ENCODE measurements at regions of chr11 and their contacts with region 1.

Region 1: GRCh38 chr11:9613118-9613829 is 39.8 kb downstream of the WEE1 start:
- DNase-seq: peak; percentile 87
- H3K4me3 Mint-ChIP-seq: peak overlapping the region; percentile 81
- H3K27ac Mint-ChIP-seq: peak overlapping the region; percentile 97
- H3K4me1 Mint-ChIP-seq: peaks cover 31% of the 10 kb centered on the region
- H3K27me3 Mint-ChIP-seq: no peaks in the 10 kb centered on the region

Region 2: GRCh38 chr11:9534791-9535781 is 78.2 kb before region 1 on chr11:
- CTCF ChIA-PET with region 1: interaction called, 17 read pairs
- POLR2A ChIA-PET with region 1: no interaction called
- DNase-seq: peak; percentile 76
- H3K4me3 Mint-ChIP-seq: no peak overlapping the region
- H3K27ac Mint-ChIP-seq: no peak overlapping the region
- H3K4me1 Mint-ChIP-seq: peaks cover 1% of the 10 kb centered on the region
- H3K27me3 Mint-ChIP-seq: no peaks in the 10 kb centered on the region

Region 3: GRCh38 chr11:9573052-9573774 is 40.1 kb before region 1 on chr11 and contains the start of gene WEE1:
- CTCF ChIA-PET with region 1: interaction called, 10 read pairs
- POLR2A ChIA-PET with region 1: no interaction called
- DNase-seq: peak; percentile 98
- H3K4me3 Mint-ChIP-seq: peak within 1 kb of the TSS; percentile 92
- H3K27ac Mint-ChIP-seq: peak within 1 kb of the TSS; percentile 83
- H3K4me1 Mint-ChIP-seq: peaks cover 52% of the 10 kb centered on the region
- H3K27me3 Mint-ChIP-seq: peaks cover 3% of the 10 kb centered on the region
- total RNA-seq, gene WEE1: 60.5 to 64.2 TPM

Region 4: GRCh38 chr11:9590717-9591116 is 22.6 kb before region 1 on chr11:
- CTCF ChIA-PET with region 1: interaction called, 23 read pairs
- POLR2A ChIA-PET with region 1: no interaction called
- DNase-seq: no peak
- H3K4me3 Mint-ChIP-seq: no peak overlapping the region
- H3K27ac Mint-ChIP-seq: no peak overlapping the region
- H3K4me1 Mint-ChIP-seq: peaks cover 7% of the 10 kb centered on the region
- H3K27me3 Mint-ChIP-seq: no peaks in the 10 kb centered on the region

Region 5: DNA sequence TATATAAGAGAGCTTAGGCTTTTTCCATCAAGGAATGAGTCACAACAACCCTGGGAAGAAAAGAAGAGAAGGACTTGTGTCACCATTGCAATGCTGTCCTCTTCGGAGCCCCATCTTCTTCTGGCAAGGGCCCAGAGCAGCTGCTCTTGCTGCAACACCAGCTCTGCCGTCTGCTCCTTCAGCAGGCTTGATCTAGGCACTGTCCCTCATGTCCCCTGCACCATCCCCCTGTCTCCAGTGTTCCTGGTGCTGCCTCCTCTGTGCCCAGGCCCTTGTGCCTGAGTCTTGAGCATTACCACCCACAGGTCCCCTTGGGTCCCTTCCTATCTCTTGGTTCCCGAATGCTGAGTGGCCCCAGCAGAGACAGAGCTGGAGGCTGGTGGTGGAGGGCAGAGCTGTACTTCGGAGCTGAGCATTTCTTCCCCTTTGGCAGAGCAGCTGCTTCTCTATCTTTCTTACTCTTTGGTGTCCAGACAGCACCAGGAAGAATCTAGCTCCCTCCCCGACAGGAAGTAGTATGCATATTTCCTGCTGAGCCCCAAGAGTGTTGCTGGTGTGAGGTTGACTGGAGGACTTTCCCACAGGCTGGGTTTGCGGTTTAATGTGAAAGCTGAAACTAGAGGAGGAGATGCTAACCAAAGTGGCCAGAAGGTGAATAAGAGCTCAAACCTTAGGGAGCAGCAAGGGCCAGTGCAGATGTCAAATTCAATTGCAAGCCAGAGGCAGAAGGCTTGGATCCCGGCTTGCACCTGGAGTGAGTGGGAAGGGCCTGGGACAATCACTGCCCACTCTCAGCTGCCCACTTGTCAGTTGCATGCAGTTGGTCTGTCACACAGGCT is 12.0 kb before region 1 on chr11:
- CTCF ChIA-PET with region 1: interaction called, 23 read pairs
- POLR2A ChIA-PET with region 1: no interaction called
- DNase-seq: peak; percentile 82
- H3K4me3 Mint-ChIP-seq: peak overlapping the region; percentile 72
- H3K27ac Mint-ChIP-seq: peak overlapping the region; percentile 91
- H3K4me1 Mint-ChIP-seq: peaks cover 33% of the 10 kb centered on the region
- H3K27me3 Mint-ChIP-seq: peaks cover 4% of the 10 kb centered on the region

Region 6: GRCh38 chr11:9748361-9748970 is 135.2 kb after region 1 on chr11:
- CTCF ChIA-PET with region 1: interaction called, 15 read pairs
- POLR2A ChIA-PET with region 1: interaction called, 3 read pairs
- DNase-seq: peak; percentile 85
- H3K4me3 Mint-ChIP-seq: no peak overlapping the region
- H3K27ac Mint-ChIP-seq: peak overlapping the region; percentile 3
- H3K4me1 Mint-ChIP-seq: peaks cover 19% of the 10 kb centered on the region
- H3K27me3 Mint-ChIP-seq: no peaks in the 10 kb centered on the region

Region 7: DNA sequence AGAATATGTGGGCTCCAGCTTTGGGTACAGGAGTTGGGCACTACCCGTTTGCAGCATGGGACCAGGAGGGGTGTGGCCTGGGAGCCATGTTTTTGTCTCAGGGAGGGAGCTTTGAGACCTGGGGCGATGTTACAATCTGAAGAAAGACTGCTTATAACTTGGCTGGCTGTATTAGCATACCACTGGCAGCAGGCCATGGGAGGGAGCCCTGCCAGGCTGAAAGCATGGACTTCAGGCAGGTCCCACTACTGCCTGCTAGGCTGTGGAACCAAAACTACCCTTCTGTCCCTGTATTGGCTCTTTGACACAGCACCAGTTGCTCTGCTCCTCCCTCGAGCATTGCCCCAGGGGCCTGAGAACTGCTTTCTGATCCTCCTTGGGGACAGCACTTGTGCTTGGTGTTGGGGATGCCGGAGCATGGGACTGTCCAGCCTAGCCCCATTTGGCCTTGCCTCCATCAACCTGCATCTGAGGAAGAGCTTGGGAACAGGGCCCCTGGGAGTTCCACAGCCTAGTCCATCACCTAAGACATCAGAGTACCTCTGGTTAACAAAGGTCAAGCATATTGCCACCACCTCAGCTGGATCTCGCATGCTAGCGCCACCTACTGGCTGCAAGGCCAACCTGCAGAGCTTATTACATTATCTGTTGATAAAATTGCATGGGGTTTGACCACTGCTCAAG is 463.3 kb after region 1 on chr11:
- CTCF ChIA-PET with region 1: no interaction called
- POLR2A ChIA-PET with region 1: no interaction called
- DNase-seq: peak; percentile 37
- H3K4me3 Mint-ChIP-seq: no peak overlapping the region
- H3K27ac Mint-ChIP-seq: no peak overlapping the region
- H3K4me1 Mint-ChIP-seq: no peaks in the 10 kb centered on the region
- H3K27me3 Mint-ChIP-seq: no peaks in the 10 kb centered on the region

Measured in activated CD4-positive, alpha-beta T cell treated with anti-CD3 and anti-CD28 coated beads, Interleukin-2, amount 10 ng/mL, durations not matched to agents 7 days and 5 days (primary cell).